CD4-positive, alpha-beta T cell (primary cell): ENCODE measurements at regions of chr14 and their contacts with region 1.

Region 1: DNA sequence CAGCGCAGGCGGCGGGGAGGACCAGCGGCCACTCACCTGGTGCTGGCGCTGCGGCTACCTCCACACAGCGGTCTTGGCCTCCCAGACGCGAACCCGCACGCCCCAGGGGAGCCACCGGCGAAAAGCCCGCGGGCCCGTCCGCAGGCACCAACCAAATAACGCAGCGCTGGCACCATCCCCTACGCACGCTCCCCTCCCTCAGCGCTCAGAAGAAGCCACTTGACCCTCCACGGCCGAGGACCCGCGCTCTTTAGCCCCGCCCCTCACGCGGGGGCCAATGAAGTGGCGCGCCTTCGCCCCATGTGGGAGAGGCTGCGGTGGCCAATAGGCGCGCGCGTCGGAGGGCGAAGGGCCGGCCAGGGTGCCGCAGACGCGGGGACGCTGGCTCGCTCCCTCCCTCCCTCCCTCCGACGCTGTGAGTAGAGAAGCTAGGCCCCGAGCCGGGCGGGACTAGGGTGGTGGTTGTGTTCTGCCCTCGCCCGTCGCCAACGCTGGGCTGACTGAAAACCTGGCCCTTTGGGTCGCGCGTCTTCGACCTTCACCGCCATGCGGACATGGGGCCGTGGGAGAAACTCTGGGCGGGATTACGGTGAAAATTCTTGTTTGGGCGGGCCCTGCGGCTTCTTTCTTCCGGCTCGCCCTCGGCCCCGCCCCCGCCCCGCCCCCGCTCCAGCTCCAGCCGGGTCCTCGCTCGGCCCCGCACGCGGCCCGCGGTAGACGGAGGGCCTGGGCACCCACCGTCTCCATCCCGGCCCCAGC is at the starts of genes DMAC2L and L2HGDH:
- DNase-seq: peak; percentile 72 to 94 (median 84)
- ATAC-seq: peak; percentile 85
- H3K4me3 ChIP-seq: peak within 1 kb of the TSS; percentile 90
- H3K4me3 Mint-ChIP-seq: peak within 1 kb of the TSS; percentile 97
- H3K27ac ChIP-seq: peak within 1 kb of the TSS; percentile 85 to 90
- H3K27ac Mint-ChIP-seq: peak within 1 kb of the TSS; percentile 98
- H3K4me1 ChIP-seq: peaks cover 23% of the 10 kb centered on the region
- H3K4me1 Mint-ChIP-seq: peaks cover 57% of the 10 kb centered on the region
- H3K27me3 ChIP-seq: no peaks in the 10 kb centered on the region
- H3K27me3 Mint-ChIP-seq: no peaks in the 10 kb centered on the region
- CTCF ChIP-seq: no peak
- total RNA-seq, gene DMAC2L: 10.8 to 13.4 TPM
- total RNA-seq, gene L2HGDH: 1.7 to 3.1 TPM

Region 2: GRCh38 chr14:49620182-49621113 is 691.7 kb before region 1 on chr14 and contains the starts of genes MGAT2 and RPL36AL:
- CTCF ChIA-PET with region 1: no interaction called
- POLR2A ChIA-PET with region 1: interaction called, 9 read pairs
- intact Hi-C with region 1: loop called in 1 of 2 experiments (anchors 5 kb)
- DNase-seq: peak; percentile 84 to 97 (median 91)
- ATAC-seq: peak; percentile 79
- H3K4me3 ChIP-seq: peak within 1 kb of the TSS; percentile 95
- H3K4me3 Mint-ChIP-seq: peak within 1 kb of the TSS; percentile 99
- H3K27ac ChIP-seq: peak within 1 kb of the TSS; percentile 98 to 99
- H3K27ac Mint-ChIP-seq: peak within 1 kb of the TSS; percentile 100
- H3K4me1 ChIP-seq: peaks cover 36% of the 10 kb centered on the region
- H3K4me1 Mint-ChIP-seq: peaks cover 73% of the 10 kb centered on the region
- H3K27me3 ChIP-seq: no peaks in the 10 kb centered on the region
- H3K27me3 Mint-ChIP-seq: no peaks in the 10 kb centered on the region
- CTCF ChIP-seq: peak; percentile 22
- total RNA-seq, gene MGAT2: 15.0 to 15.1 TPM
- total RNA-seq, gene RPL36AL: 339 to 370 TPM

Region 3: DNA sequence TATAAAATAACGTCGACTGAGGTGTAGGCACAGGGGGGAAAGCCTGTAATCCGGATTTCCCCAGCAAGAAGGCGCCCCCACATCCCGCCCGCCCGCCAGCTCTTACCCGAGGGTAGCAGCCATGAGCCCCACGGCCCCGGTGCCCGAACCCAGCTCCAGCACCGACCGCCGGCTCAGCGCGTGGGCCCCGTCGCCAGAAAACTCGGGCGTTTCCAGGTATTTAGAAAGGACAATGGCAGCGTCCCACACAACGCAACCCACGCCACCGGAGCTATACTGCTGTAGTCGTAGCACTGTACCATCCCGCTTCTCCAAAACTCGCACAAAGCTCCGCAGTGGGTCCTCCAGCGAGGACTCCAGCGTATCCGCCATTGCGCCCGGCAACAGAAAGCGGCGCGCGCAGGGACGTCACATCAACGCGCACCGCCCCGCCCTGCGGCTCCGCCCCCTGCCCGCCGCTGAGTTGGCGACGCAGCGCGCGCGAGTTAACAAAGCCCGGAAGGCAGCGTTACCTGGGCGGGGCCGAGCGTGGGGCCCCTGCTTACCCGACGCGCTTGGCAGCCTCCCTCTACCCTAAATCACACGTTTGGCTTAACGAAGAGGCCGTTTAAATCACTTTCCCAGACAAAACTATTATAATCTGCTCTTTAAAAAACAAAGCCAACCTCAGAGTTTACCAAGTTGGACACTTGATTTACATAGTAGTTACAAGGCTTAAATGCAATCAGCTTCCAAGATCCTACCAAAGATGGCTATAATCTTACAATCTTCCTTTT is 195.8 kb before region 1 on chr14 and contains the start of gene VCPKMT:
- CTCF ChIA-PET with region 1: no interaction called
- POLR2A ChIA-PET with region 1: interaction called, 5 read pairs
- intact Hi-C with region 1: loop called in 1 of 2 experiments (anchors 5 kb)
- DNase-seq: peak; percentile 90 to 98 (median 96)
- ATAC-seq: peak; percentile 98
- H3K4me3 ChIP-seq: peak within 1 kb of the TSS; percentile 75
- H3K4me3 Mint-ChIP-seq: peak within 1 kb of the TSS; percentile 99
- H3K27ac ChIP-seq: peak within 1 kb of the TSS; percentile 81 to 95
- H3K27ac Mint-ChIP-seq: peak within 1 kb of the TSS; percentile 99
- H3K4me1 ChIP-seq: peaks cover 15% of the 10 kb centered on the region
- H3K4me1 Mint-ChIP-seq: peaks cover 31% of the 10 kb centered on the region
- H3K27me3 ChIP-seq: no peaks in the 10 kb centered on the region
- H3K27me3 Mint-ChIP-seq: no peaks in the 10 kb centered on the region
- CTCF ChIP-seq: no peak
- total RNA-seq, gene VCPKMT: 30.4 to 32.4 TPM

Region 4: DNA sequence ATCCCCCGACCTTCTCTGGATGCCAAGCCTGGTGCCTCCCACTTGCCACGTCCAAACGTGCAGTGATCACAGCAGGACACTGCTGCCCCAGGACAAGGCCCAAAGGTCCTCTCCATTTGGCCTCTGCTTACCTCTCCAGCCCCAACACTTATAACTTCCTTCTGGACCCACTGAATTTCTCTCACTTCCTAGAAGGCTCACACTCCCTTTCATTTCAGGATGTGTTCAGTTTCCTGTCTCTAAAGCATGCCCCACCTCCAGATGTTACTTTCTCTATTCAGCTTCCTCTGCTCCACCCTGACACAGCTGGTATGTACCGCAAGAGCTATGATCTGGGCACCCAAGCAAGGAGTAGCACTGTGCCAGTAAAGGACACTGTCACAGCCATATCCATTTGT is 51.6 kb after region 1 on chr14:
- CTCF ChIA-PET with region 1: interaction called, 5 read pairs
- POLR2A ChIA-PET with region 1: interaction called, 14 read pairs
- intact Hi-C with region 1: no loop called
- DNase-seq: peak in 12 of 14 experiments; percentile 12 to 91 (median 44)
- ATAC-seq: peak; percentile 96
- H3K4me3 ChIP-seq: peak overlapping the region; percentile 66
- H3K4me3 Mint-ChIP-seq: peak overlapping the region; percentile 88
- H3K27ac ChIP-seq: peak overlapping the region; percentile 67 to 91
- H3K27ac Mint-ChIP-seq: peak overlapping the region; percentile 86
- H3K4me1 ChIP-seq: peaks cover 25% of the 10 kb centered on the region
- H3K4me1 Mint-ChIP-seq: peaks cover 45% of the 10 kb centered on the region
- H3K27me3 ChIP-seq: no peaks in the 10 kb centered on the region
- H3K27me3 Mint-ChIP-seq: no peaks in the 10 kb centered on the region
- CTCF ChIP-seq: no peak

Region 5: DNA sequence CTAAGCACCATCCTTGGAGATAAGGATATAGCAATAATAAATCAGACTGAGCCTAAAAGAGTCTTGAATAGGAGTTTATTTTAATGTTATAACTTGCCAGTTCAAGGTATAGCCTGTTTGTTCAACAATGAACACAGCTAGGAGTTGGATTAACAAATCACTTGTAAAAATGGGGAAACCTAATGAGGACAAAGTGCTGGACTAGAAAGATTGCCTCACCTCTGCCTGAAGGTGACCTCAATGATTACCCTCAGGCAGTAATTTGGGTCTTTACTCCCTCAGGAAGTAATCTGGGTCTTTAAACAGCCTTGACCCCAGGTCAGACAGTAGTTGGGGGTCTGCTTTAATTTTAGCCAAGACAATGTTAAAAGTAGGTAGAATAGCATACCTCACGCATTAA is 120.0 kb after region 1 on chr14:
- CTCF ChIA-PET with region 1: no interaction called
- POLR2A ChIA-PET with region 1: no interaction called
- intact Hi-C with region 1: no loop called
- DNase-seq: no peak
- ATAC-seq: no peak
- H3K4me3 ChIP-seq: no peak overlapping the region
- H3K4me3 Mint-ChIP-seq: no peak overlapping the region
- H3K27ac ChIP-seq: no peak overlapping the region
- H3K27ac Mint-ChIP-seq: no peak overlapping the region
- H3K4me1 ChIP-seq: no peaks in the 10 kb centered on the region
- H3K4me1 Mint-ChIP-seq: no peaks in the 10 kb centered on the region
- H3K27me3 ChIP-seq: no peaks in the 10 kb centered on the region
- H3K27me3 Mint-ChIP-seq: no peaks in the 10 kb centered on the region
- CTCF ChIP-seq: no peak

Region 6: GRCh38 chr14:50773632-50774541 is 461.7 kb after region 1 on chr14:
- CTCF ChIA-PET with region 1: no interaction called
- POLR2A ChIA-PET with region 1: no interaction called
- intact Hi-C with region 1: loop called in 1 of 2 experiments (anchors 10 kb)
- DNase-seq: peak in 5 of 14 experiments; percentile 10 to 47 (median 35)
- ATAC-seq: peak; percentile 72
- H3K4me3 ChIP-seq: no peak overlapping the region
- H3K4me3 Mint-ChIP-seq: no peak overlapping the region
- H3K27ac ChIP-seq: no peak overlapping the region
- H3K27ac Mint-ChIP-seq: peak overlapping the region; percentile 0
- H3K4me1 ChIP-seq: peaks cover 11% of the 10 kb centered on the region
- H3K4me1 Mint-ChIP-seq: peaks cover 37% of the 10 kb centered on the region
- H3K27me3 ChIP-seq: no peaks in the 10 kb centered on the region
- H3K27me3 Mint-ChIP-seq: no peaks in the 10 kb centered on the region
- CTCF ChIP-seq: peak; percentile 63